ENCODE measurements at regions of chr6 and their contacts with region 1.

Region 1: DNA sequence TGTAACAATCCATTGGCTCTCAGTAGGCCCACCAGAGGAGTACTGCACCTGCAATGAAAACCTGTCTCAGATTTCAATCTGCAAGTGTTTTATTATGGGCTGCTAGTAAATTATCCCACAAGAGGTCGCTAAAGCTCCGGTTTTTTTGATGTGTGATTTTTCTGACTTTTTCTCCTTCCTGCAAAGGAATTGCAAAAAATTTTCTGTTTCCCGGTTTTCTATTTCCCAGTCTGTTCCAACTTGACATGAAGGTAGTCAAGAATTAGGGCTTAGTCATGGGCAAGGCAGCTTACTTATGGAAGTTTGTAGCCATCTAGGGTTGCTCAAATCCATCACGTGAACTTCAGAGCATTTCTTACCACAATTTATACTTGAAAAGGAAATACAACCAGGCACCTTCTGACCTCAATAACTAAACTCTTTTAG is 38.5 kb upstream of the AHI1 start:
- DNase-seq: peak; percentile 12 to 56
- H3K4me3 ChIP-seq: no peak overlapping the region
- H3K27ac ChIP-seq: no peak overlapping the region
- H3K4me1 ChIP-seq: peaks cover 13% of the 10 kb centered on the region
- H3K27me3 ChIP-seq: no peaks in the 10 kb centered on the region; the same call in 1 of the 2 replicates
- CTCF ChIP-seq: peak; percentile 88

Region 2: DNA sequence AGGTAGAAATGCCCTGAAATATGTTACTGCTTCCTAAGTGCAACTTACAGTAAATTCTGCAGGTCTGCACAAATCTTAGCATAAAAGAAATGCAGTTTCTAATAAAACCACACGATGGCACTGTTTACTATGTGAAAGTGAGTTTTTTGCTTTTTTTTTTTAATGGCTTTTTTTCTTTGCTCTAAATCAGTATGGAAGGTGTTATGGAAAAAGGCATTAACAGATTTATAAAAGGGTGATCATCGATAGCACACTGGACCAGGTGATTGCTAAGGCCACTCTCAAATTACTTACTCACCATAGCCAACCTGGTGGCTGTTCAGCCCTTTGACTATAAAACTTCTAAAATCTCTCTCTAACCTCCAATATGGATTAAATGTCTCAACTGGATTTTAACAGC is 84.3 kb before region 1 on chr6:
- CTCF ChIA-PET with region 1: no interaction called
- POLR2A ChIA-PET with region 1: no interaction called
- intact Hi-C with region 1: loop called (anchors 10 kb)
- DNase-seq: peak in 1 of 2 experiments; percentile 37
- H3K4me3 ChIP-seq: no peak overlapping the region
- H3K27ac ChIP-seq: no peak overlapping the region
- H3K4me1 ChIP-seq: no peaks in the 10 kb centered on the region
- H3K27me3 ChIP-seq: no peaks in the 10 kb centered on the region
- CTCF ChIP-seq: peak; percentile 88

Region 3: GRCh38 chr6:135514706-135515105 is 21.3 kb before region 1 on chr6:
- CTCF ChIA-PET with region 1: no interaction called
- POLR2A ChIA-PET with region 1: interaction called, 21 read pairs
- intact Hi-C with region 1: no loop called
- DNase-seq: no peak
- H3K4me3 ChIP-seq: no peak overlapping the region
- H3K27ac ChIP-seq: no peak overlapping the region
- H3K4me1 ChIP-seq: no peaks in the 10 kb centered on the region
- H3K27me3 ChIP-seq: no peaks in the 10 kb centered on the region
- CTCF ChIP-seq: no peak

Region 4: DNA sequence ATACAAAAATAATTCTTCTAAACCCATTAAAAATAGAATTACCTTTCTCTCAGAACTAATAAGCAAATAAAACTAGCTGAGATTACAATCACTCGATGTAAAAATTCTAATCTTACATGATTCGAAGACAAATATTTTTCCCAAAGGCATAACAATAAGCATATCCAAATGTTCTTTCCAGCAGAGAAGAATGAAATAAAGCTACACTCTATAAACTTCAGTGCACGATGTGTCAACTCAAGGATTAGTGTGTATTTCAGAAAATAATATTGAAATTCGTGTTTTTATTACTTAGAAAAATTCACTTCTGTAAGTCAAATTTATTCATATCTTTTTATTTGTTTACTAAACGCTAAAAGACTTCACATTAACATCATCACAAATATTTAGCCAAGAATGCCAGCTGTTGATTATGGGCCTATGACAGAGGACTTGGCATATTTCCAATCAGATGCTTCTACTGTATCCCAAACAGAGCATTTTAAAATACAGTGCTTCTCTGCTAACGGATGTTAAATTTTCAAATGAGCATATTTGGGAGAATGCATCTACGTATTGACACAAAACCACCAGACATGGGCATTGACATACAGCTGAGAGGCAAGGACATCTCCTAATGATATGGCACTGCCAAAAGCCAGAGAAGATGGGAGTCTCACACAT is 260.8 kb after region 1 on chr6:
- CTCF ChIA-PET with region 1: no interaction called
- POLR2A ChIA-PET with region 1: no interaction called
- intact Hi-C with region 1: no loop called
- DNase-seq: no peak
- H3K4me3 ChIP-seq: no peak overlapping the region
- H3K27ac ChIP-seq: no peak overlapping the region
- H3K4me1 ChIP-seq: no peaks in the 10 kb centered on the region
- H3K27me3 ChIP-seq: no peaks in the 10 kb centered on the region
- CTCF ChIP-seq: no peak

Region 5: GRCh38 chr6:135851442-135852271 is 315.7 kb after region 1 on chr6 and contains the start of gene PDE7B:
- CTCF ChIA-PET with region 1: no interaction called
- POLR2A ChIA-PET with region 1: no interaction called
- intact Hi-C with region 1: loop called (anchors 5 kb)
- DNase-seq: peak; percentile 70 to 74
- H3K4me3 ChIP-seq: peak within 1 kb of the TSS; percentile 6; the same call in 1 of the 2 replicates
- H3K27ac ChIP-seq: no peak within 1 kb of the TSS
- H3K4me1 ChIP-seq: peaks cover 13% of the 10 kb centered on the region; the same call in 1 of the 2 replicates
- H3K27me3 ChIP-seq: no peaks in the 10 kb centered on the region
- CTCF ChIP-seq: no peak
- total RNA-seq, gene PDE7B: 0.31 TPM in 1 of 2 replicates, not detected in the other

Region 6: DNA sequence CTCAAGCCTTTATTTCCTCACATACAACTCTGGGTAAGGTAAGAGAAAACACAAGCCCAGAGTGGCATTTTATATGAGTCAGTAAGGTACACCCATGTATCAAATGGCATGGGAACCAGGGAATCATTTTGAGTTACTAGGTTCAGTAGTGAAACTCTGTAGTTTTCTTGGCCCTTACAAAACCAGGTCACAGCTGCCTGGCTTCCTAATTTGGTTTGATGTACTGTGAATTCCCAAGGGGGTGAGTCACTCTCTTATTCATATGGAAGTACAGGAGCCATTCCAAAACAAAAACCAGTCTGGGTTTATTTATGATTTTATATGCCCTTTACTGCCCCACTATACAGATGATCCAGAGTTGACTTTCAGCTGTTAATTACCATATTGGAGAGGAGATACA is 386.2 kb after region 1 on chr6:
- CTCF ChIA-PET with region 1: no interaction called
- POLR2A ChIA-PET with region 1: no interaction called
- intact Hi-C with region 1: loop called (anchors 5 kb)
- DNase-seq: peak; percentile 52 to 95
- H3K4me3 ChIP-seq: no peak overlapping the region; the same call in 1 of the 2 replicates
- H3K27ac ChIP-seq: peak overlapping the region; percentile 88
- H3K4me1 ChIP-seq: peaks cover 20% of the 10 kb centered on the region
- H3K27me3 ChIP-seq: no peaks in the 10 kb centered on the region
- CTCF ChIP-seq: no peak

Region 7: GRCh38 chr6:136226027-136226673 is 690.1 kb after region 1 on chr6:
- CTCF ChIA-PET with region 1: interaction called, 7 read pairs
- POLR2A ChIA-PET with region 1: no interaction called
- intact Hi-C with region 1: loop called (anchors 1 kb)
- DNase-seq: peak; percentile 36 to 52
- H3K4me3 ChIP-seq: peak overlapping the region; percentile 49
- H3K27ac ChIP-seq: peak overlapping the region; percentile 69
- H3K4me1 ChIP-seq: peaks cover 6% of the 10 kb centered on the region
- H3K27me3 ChIP-seq: no peaks in the 10 kb centered on the region
- CTCF ChIP-seq: peak; percentile 100

Region 8: GRCh38 chr6:136317021-136317694 is 781.2 kb after region 1 on chr6:
- CTCF ChIA-PET with region 1: no interaction called
- POLR2A ChIA-PET with region 1: no interaction called
- intact Hi-C with region 1: loop called (anchors 10 kb)
- DNase-seq: peak; percentile 45 to 60
- H3K4me3 ChIP-seq: no peak overlapping the region
- H3K27ac ChIP-seq: no peak overlapping the region
- H3K4me1 ChIP-seq: no peaks in the 10 kb centered on the region
- H3K27me3 ChIP-seq: no peaks in the 10 kb centered on the region
- CTCF ChIP-seq: peak; percentile 94

Measured in PC-9 (cell line).